Dendritic cell treated with granulocyte-macrophage colony-stimulating factor and Interleukin-4, amounts not matched to agents 40 ng/mL and 50 ng/mL, for 4 days (primary cell): ENCODE measurements at regions of chr12 and their contacts with region 1.

Region 1: DNA sequence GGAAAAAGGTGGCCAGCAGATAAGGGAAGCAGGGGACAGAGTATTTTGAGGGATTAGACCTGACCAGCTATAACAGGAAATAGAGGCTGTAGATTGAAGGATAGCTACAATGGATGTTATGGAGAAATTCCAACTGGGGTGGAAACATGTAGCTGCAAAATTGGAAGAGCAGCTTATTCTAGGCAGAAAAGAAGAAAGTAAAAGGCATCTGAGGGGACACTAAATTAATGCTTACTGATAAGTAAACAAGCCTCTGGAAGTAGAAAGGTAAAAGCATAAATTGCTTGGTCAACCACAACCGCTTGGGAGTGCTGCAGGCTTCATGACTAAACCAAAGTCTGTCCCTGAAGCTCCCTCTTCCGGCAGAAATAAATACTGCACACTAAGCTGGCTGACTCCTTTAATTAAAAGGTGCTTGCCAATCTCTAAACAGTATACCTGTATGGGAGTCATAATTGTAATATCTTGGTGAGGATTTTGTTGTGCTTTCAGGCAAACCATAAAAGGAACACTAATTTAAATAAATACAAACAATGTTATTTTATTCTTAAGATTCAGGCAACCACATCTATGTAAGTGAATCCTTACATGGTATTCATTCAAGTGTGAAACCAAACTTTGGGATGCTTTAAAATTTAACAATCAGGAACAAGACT is 7.7 kb downstream of the UBC start:
- H3K4me3 Mint-ChIP-seq: no peak overlapping the region
- H3K27ac Mint-ChIP-seq: peak overlapping the region; percentile 71
- H3K4me1 Mint-ChIP-seq: peaks cover 62% of the 10 kb centered on the region
- H3K27me3 Mint-ChIP-seq: no peaks in the 10 kb centered on the region

Region 2: DNA sequence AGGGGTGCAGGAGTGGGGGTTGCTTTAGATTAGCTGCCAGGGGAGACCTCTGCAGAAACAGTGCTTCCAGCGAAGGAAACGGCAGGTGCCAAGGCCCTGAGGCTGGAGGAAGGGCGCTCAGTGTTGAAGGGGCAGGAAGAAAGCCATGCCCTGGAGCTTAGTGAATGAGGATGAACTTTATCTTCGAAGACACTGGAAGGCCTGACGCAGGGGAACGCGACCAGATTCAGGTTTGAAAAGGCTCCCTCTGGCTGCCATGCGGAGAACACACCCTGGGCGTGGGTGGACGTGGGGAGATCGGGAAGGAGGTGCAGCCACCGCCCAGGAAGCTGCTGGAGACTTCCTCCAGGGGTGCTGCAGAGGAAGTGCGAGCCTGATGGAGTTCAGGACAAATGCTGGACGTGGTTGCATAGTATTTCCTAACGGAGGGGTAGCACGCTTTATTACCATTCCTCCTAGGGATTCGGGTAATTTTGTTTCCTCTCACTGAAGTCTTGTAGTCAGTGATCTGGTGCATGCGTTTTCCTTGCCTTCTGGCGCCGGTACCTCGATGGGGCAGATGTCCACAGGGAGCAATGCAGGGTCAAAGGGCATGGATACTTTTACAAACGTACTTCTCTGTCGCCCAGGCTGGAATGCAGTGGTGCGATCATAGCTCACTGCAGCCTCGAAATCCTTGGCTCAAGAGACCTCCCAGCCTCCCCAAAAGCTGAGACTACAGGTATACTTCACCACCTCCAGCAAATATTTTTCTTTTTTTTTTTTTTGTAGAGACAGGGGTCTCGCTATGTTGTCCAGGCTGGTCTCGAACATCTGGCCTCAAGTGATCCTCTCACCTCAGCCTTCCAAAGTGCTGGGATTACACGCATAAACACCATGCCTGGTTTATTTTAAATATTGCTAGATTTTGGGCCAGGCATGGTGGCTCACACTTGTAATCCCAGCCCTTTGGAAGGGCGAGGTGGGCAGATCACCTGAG is 34.1 kb after region 1 on chr12:
- intact Hi-C with region 1: loop called (anchors 5 kb)
- H3K4me3 Mint-ChIP-seq: no peak overlapping the region
- H3K27ac Mint-ChIP-seq: no peak overlapping the region
- H3K4me1 Mint-ChIP-seq: peaks cover 14% of the 10 kb centered on the region
- H3K27me3 Mint-ChIP-seq: peaks cover 4% of the 10 kb centered on the region

Region 3: DNA sequence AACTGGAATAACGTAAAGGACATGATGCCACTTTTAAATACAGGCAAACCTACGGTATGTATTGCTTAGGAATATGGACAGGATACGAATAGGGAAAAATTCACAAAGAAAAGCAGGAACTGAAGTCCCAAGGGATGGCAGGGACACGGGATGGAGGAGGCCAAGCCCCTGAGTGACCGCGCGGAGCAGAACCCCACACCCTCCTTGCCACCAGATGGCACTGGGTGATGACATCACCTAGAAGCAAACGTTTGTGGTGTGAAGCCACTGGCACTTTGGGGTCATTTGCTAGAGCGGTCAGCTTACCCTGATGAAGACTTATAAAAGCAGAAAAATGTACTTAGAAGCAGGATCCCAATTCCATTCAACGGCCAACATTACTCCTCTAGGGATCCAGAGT is 72.8 kb after region 1 on chr12:
- intact Hi-C with region 1: no loop called
- H3K4me3 Mint-ChIP-seq: no peak overlapping the region
- H3K27ac Mint-ChIP-seq: no peak overlapping the region
- H3K4me1 Mint-ChIP-seq: no peaks in the 10 kb centered on the region
- H3K27me3 Mint-ChIP-seq: no peaks in the 10 kb centered on the region